Tibial artery (tissue), 4 donors: ENCODE measurements at regions of chr7 and their contacts with region 1.

Region 1: DNA sequence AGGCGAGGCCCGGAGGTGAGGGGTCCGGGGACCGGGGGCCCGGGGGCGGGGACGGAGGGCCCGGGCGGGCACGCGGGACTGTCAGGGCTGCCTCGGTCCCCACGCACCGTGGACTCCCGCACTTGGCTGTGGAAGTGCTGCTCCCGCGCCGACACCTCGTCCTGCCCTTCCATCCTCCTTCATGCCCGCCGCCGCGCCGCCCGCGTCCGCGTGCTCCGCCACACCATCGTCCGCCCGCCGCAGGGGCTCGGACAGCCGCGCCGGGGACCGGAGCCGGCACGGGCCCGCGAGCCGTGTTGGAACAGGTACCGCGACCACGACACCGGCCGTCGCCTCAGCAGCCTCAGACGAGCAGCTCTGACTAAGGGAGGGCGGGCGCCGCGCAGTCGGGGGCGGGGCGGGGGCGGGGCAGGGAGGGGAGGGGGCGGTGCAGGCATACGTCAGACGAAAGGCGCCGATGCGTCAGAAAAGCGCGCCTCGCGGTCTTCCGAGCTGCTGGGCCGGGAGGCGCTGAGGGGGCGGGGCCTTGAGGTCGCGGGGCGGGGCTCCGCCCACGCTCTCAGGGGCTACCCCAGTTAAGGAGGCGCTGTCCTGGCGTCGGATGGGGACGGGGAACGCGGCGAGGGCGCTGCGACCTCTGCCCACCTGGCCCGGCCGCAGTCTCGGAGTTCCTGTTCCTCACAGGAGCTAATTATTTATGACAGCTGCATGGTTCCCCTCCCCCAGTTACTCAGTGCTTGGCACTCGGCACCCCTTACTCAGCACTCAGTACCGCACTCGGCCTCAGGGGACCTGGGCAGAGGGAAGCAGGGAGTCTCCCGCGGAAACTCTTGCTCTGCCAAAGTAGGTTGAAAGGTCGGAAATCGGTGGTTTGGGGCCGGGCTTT is at the start of gene LMBR1:
- DNase-seq: peak; percentile 91 to 97
- H3K4me3 ChIP-seq: peak within 1 kb of the TSS; percentile 68 to 96
- H3K27ac ChIP-seq: peak within 1 kb of the TSS; percentile 81 to 84
- H3K4me1 ChIP-seq: peaks cover 0 to 20% (median 11%) of the 10 kb centered on the region in 4 donors
- H3K27me3 ChIP-seq: no peaks in the 10 kb centered on the region
- CTCF ChIP-seq: peak; percentile 72 to 82

Region 2: DNA sequence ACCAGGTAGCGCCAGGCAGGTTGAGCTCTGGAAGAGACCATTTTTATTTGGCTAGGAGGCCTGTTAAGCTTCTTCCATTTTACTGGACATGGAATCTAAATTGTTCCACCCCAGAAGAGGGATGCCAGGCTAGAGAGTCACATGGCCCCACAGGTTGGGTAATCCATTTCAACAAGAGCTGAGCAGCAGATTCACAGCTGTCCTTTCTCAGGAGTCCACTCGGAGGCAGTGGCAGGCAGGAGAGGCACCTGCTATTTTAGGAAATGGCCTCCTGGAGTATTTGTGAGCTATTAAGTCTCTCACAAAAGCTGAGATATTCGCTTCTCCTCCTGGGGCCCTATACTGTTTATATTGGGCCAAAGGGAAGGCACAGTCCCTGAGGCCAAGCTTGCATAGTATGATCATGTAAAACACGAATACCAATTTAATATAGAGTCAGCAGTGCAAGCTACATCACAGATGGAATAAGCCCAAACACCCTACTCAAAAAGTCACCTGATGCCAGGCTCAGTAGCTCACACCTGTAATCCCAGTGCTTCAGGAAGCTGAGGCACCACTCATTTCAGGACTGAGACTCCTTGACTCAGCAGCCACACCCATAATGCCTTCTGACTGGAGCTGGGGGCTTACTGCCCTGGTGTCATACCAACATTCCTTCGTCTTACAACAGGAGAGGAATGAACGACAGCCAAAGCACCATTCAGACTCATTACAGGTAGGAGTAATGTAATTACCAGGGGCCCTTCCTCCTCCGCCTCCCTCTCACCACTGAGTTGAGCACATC is 124.2 kb before region 1 on chr7:
- intact Hi-C with region 1: no loop called
- DNase-seq: no peak
- H3K4me3 ChIP-seq: no peak overlapping the region
- H3K27ac ChIP-seq: no peak overlapping the region
- H3K4me1 ChIP-seq: no peaks in the 10 kb centered on the region
- H3K27me3 ChIP-seq: no peaks in the 10 kb centered on the region
- CTCF ChIP-seq: no peak

Region 3: DNA sequence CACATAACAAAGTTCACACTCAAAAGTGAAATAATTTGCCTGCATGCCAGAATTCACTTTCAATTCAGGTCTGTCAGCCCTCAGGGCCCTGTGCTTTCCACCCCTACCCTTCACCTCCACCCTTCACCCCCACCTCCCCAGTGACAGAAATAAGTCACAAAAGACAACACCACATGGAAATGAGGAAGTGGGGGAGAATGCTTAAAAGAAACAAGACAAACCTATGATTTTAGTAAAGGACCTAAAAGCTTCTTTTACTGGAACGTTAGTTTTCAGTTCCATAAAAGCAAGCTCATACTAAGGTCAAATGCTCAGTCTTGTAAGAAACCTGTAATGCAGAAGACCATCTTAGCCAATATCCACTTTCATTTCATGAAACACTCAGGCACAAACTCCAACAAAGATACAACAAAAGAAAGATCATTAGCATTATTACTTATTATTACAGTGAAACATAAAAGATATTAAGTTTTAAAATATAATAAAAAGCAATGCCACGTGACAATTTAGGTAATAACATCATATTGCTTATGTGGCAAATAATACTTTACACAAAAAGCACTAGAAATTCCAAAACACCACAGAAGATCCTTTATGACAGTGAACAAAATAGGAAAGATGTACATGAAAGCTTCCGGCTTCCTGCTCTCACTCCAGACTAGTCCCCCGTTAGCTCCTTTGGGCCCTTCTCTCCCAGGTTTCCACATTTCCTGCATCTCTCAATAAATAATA is 112.2 kb before region 1 on chr7:
- intact Hi-C with region 1: no loop called
- DNase-seq: no peak
- H3K4me3 ChIP-seq: no peak overlapping the region
- H3K27ac ChIP-seq: no peak overlapping the region
- H3K4me1 ChIP-seq: peaks cover 0 to 12% (median 0%) of the 10 kb centered on the region in 4 donors
- H3K27me3 ChIP-seq: no peaks in the 10 kb centered on the region
- CTCF ChIP-seq: no peak

Region 4: GRCh38 chr7:156931957-156932381 is 38.9 kb after region 1 on chr7:
- intact Hi-C with region 1: no loop called
- DNase-seq: no peak
- H3K4me3 ChIP-seq: no peak overlapping the region
- H3K27ac ChIP-seq: no peak overlapping the region
- H3K4me1 ChIP-seq: no peaks in the 10 kb centered on the region
- H3K27me3 ChIP-seq: peaks cover 0 to 29% of the 10 kb centered on the region in 2 donors
- CTCF ChIP-seq: no peak

Region 5: GRCh38 chr7:156949541-156950380 is 56.7 kb after region 1 on chr7 and contains the start of gene NOM1:
- intact Hi-C with region 1: loop called (anchors 5 kb)
- DNase-seq: peak; percentile 83 to 90
- H3K4me3 ChIP-seq: peak within 1 kb of the TSS; percentile 96 to 98
- H3K27ac ChIP-seq: peak within 1 kb of the TSS; percentile 49 to 54
- H3K4me1 ChIP-seq: peaks cover 0 to 31% (median 24%) of the 10 kb centered on the region in 4 donors
- H3K27me3 ChIP-seq: peaks cover 0 to 10% of the 10 kb centered on the region in 2 donors
- CTCF ChIP-seq: peak; percentile 64 to 93

Region 6: GRCh38 chr7:157138424-157139110 is 245.5 kb after region 1 on chr7 and contains the start of gene UBE3C:
- intact Hi-C with region 1: loop called (anchors 10 kb)
- DNase-seq: peak; percentile 80 to 93
- H3K4me3 ChIP-seq: peak within 1 kb of the TSS; percentile 79 to 80
- H3K27ac ChIP-seq: peak within 1 kb of the TSS; percentile 83 to 88
- H3K4me1 ChIP-seq: peaks cover 0 to 33% (median 20%) of the 10 kb centered on the region in 4 donors
- H3K27me3 ChIP-seq: no peaks in the 10 kb centered on the region
- CTCF ChIP-seq: peak in 1 of 2 experiments; percentile 8

Region 7: GRCh38 chr7:158387546-158387891 is 1494.5 kb after region 1 on chr7:
- intact Hi-C with region 1: no loop called
- DNase-seq: no peak
- H3K4me3 ChIP-seq: no peak overlapping the region
- H3K27ac ChIP-seq: no peak overlapping the region
- H3K4me1 ChIP-seq: no peaks in the 10 kb centered on the region
- H3K27me3 ChIP-seq: peaks cover 0 to 28% of the 10 kb centered on the region in 2 donors
- CTCF ChIP-seq: no peak